Right ventricle myocardium superior (tissue), 1 donor: ENCODE measurements at regions of chr4 and their contacts with region 1.

Region 1: GRCh38 chr4:118740869-118741268 is 55.7 kb downstream of the METTL14 start:
- DNase-seq: no peak
- ATAC-seq: peak; percentile 36

Region 2: DNA sequence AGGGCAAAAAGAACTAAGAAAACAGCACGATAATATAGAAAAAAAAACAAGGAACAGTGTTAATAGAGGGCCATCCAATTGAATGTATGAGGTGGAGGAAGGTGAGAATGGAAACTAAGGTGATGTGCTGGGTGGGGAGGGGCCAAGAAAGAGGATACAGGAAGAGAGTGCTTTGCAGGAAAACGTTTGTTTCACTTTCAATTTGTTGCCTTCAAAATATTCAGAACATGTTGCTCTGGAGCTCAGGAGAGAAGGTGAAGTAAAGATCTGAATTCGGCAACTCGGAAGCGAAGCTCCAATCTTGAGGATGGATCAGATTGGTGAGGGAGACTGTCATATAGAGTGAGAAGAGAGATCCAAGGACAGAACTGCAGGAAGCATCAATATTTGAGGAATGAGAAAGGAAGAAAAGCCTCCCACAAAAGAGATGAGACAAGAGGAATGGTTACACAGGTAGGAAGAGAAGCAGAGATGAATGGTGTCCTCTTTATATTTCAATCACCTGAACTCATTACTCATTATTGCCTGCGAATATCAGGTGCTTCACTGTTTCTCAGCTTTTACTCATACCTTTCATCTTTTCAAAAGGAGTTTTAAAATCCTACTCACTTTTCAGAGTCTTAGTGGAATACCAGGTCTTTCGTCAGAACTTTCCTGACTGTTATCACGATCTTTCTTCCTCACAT is 109.8 kb after region 1 on chr4:
- intact Hi-C with region 1: no loop called
- DNase-seq: no peak
- ATAC-seq: peak; percentile 39

Region 3: GRCh38 chr4:118974758-118975157 is 233.9 kb after region 1 on chr4:
- intact Hi-C with region 1: loop called (anchors 10 kb)
- DNase-seq: no peak
- ATAC-seq: no peak